ENCODE measurements at regions of chr12 and their contacts with region 1.

Region 1: GRCh38 chr12:31629756-31630732 is 29.4 kb upstream of the ETFBKMT start:
- DNase-seq: no peak

Region 2: GRCh38 chr12:31406345-31406744 is 223.7 kb before region 1 on chr12:
- intact Hi-C with region 1: loop called in 1 of 2 experiments (anchors 5 kb)
- DNase-seq: no peak

Region 3: GRCh38 chr12:31578632-31579031 is 51.4 kb before region 1 on chr12:
- intact Hi-C with region 1: loop called in 1 of 2 experiments (anchors 10 kb)
- DNase-seq: no peak

Region 4: DNA sequence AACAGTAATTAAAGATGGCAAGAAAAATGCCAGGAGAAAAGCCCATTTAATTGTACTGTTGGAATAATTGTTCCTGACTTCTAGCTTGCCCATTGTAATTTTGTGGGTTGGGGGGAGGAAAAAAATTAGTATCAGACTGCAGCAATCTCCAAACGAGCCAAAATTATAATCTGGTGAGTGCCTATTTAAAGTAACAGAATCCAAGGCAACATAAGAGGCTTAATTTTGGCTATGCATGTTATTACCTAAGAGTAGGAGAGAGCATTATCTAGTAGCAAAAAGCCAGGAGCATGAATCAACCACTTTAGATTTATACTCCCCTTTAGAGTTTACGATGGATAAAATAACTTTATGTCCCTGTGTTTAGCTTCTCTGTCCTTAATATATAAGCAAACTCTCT is 24.5 kb before region 1 on chr12:
- intact Hi-C with region 1: no loop called
- DNase-seq: no peak